ENCODE measurements at regions of chr1 and their contacts with region 1.

Region 1: GRCh38 chr1:46030876-46031660 is 101.4 kb downstream of the PIK3R3 start:
- DNase-seq: no peak
- H3K4me3 ChIP-seq: no peak overlapping the region
- H3K27ac ChIP-seq: no peak overlapping the region
- H3K4me1 ChIP-seq: no peaks in the 10 kb centered on the region
- H3K27me3 ChIP-seq: no peaks in the 10 kb centered on the region
- CTCF ChIP-seq: no peak

Region 2: GRCh38 chr1:45913183-45913683 is 117.8 kb before region 1 on chr1:
- CTCF ChIA-PET with region 1: no interaction called
- dilution Hi-C with region 1: no loop called
- in situ Hi-C with region 1: no loop called
- intact Hi-C with region 1: no loop called
- DNase-seq: peak; percentile 89
- H3K4me3 ChIP-seq: peak overlapping the region in 1 of 3 experiments; percentile 0
- H3K27ac ChIP-seq: peak overlapping the region; percentile 49
- H3K4me1 ChIP-seq: peaks cover 10% of the 10 kb centered on the region
- H3K27me3 ChIP-seq: no peaks in the 10 kb centered on the region
- CTCF ChIP-seq: peak in 1 of 2 donors; percentile 6

Region 3: DNA sequence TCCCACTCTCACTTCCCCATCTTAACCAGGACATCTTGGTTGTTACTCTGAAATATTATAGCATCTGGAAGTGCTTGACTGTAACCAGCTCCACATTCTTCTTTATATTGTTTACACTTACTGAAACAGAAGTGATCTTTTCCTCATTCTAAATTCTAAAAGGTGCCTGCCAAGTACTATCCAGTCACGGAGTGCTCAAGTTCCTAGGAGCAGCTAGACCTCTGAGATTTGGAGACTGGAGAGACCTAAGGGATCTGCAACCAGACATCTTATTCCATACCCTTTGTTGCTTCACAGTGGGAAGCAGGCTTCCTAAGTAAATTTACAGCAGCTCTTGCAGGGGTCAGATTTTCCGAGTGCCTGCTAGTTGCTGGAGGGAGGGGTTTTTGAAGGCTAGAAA is 77.1 kb before region 1 on chr1:
- CTCF ChIA-PET with region 1: no interaction called
- dilution Hi-C with region 1: no loop called
- in situ Hi-C with region 1: no loop called
- intact Hi-C with region 1: no loop called
- DNase-seq: no peak
- H3K4me3 ChIP-seq: no peak overlapping the region
- H3K27ac ChIP-seq: no peak overlapping the region
- H3K4me1 ChIP-seq: peaks cover 19% of the 10 kb centered on the region
- H3K27me3 ChIP-seq: no peaks in the 10 kb centered on the region
- CTCF ChIP-seq: no peak

Region 4: DNA sequence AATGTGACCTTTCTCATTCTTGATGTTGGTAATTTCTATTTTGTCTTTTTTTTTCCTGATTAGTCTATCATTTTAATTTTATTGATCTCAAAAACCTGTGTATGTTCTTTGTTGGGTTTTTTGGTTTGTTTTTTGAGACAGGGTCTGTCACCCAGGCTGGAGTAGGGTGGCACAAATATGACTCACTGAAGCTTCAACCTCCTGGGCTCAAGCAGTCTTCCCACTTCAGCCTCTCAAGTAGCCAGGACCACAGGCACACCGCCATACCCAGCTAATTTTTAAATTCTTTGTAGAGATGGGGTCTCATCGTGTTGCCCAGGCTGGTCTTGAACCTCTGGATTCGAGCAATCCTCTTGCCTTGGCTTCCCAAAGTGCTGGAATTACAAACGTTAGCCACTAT is 43.9 kb before region 1 on chr1:
- CTCF ChIA-PET with region 1: no interaction called
- dilution Hi-C with region 1: loop called (anchors 5 kb)
- in situ Hi-C with region 1: no loop called
- intact Hi-C with region 1: no loop called
- DNase-seq: no peak
- H3K4me3 ChIP-seq: no peak overlapping the region
- H3K27ac ChIP-seq: no peak overlapping the region
- H3K4me1 ChIP-seq: no peaks in the 10 kb centered on the region
- H3K27me3 ChIP-seq: no peaks in the 10 kb centered on the region
- CTCF ChIP-seq: no peak

Region 5: DNA sequence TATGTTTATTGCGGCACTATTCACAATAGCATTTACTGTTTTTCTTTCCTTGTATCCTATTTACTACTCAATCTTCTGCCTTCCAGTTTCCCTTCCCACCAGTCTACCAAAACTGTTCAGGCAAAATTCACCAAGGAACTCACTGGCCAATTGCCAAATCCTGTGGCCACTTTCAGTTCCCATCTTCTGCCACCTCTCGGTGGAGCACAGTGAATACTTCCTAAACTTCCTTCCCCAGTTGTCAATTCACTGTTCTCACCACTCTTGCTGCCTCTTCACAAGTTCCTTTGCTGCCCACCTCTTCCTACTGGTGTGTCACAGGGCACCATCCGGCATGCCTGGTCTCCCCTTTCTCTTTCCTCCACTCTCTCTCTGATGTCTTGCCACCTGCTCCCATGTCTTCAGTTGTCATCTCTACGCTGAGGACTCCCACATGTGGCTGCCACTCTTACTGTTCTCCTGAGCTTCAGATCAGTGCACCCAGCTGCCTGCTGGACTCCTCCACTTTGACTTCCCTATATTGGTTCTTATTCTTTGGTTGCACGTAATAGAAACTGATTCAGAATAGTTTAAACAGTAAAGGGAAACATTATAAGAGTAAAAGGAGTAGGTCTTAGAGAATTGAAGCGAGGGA is 13.1 kb before region 1 on chr1:
- CTCF ChIA-PET with region 1: no interaction called
- dilution Hi-C with region 1: no loop called
- in situ Hi-C with region 1: no loop called
- intact Hi-C with region 1: no loop called
- DNase-seq: no peak
- H3K4me3 ChIP-seq: no peak overlapping the region
- H3K27ac ChIP-seq: no peak overlapping the region
- H3K4me1 ChIP-seq: no peaks in the 10 kb centered on the region
- H3K27me3 ChIP-seq: no peaks in the 10 kb centered on the region
- CTCF ChIP-seq: no peak

Region 6: GRCh38 chr1:46152016-46152415 is 120.9 kb after region 1 on chr1:
- CTCF ChIA-PET with region 1: no interaction called
- dilution Hi-C with region 1: no loop called
- in situ Hi-C with region 1: no loop called
- intact Hi-C with region 1: no loop called
- DNase-seq: peak; percentile 77
- H3K4me3 ChIP-seq: no peak overlapping the region
- H3K27ac ChIP-seq: no peak overlapping the region
- H3K4me1 ChIP-seq: no peaks in the 10 kb centered on the region
- H3K27me3 ChIP-seq: no peaks in the 10 kb centered on the region
- CTCF ChIP-seq: no peak